CD4-positive, alpha-beta T cell (primary cell): ENCODE measurements at regions of chr15 and their contacts with region 1.

Region 1: DNA sequence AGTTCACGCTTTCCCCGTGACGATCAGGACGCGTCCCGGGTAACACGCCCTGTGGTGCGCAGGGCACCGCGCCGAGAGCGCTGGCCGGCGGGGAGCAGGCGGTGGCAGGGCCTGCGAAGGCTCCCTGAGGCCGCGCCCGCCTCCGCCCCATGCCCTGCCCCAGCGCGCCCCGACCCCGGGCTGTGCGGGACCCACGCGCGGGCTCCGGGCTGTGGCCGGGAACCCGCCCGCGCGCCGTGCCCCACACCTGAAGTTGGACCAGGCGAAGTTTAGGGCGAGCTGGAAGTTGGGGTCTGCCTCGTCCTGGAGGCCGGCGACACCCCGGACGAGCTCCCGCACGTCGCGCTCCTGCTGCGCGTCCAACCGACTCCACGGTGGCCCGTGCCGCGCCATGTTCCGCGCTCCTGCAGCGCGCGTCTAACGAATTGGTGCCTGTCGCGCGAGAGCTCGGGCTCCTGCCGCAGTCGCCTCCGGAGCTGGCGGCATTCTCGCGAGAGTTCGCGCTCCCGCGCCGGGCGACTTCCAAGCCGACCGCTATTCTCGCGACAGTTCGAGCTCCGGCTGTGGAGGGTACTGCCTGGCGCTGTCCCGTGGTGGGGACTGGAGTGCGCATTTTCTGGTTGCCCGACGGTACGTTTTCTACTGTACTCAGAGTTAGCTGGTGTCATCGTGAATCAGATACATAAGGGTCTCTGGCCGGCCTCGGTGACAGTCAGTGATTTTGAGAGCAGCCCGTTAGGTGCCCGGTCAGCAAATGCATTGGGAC is at the start of gene TUBGCP5:
- DNase-seq: peak; percentile 93 to 99 (median 95)
- ATAC-seq: peak; percentile 94
- H3K4me3 ChIP-seq: peak within 1 kb of the TSS; percentile 79
- H3K4me3 Mint-ChIP-seq: peak within 1 kb of the TSS; percentile 100
- H3K27ac ChIP-seq: no peak within 1 kb of the TSS
- H3K27ac Mint-ChIP-seq: peak within 1 kb of the TSS; percentile 91
- H3K4me1 ChIP-seq: peaks cover 18% of the 10 kb centered on the region
- H3K4me1 Mint-ChIP-seq: peaks cover 31% of the 10 kb centered on the region
- H3K27me3 ChIP-seq: no peaks in the 10 kb centered on the region
- H3K27me3 Mint-ChIP-seq: no peaks in the 10 kb centered on the region
- CTCF ChIP-seq: no peak
- total RNA-seq, gene TUBGCP5: 24.2 to 24.5 TPM

Region 2: GRCh38 chr15:22786868-22787698 is 252.3 kb before region 1 on chr15:
- CTCF ChIA-PET with region 1: interaction called, 3 read pairs
- POLR2A ChIA-PET with region 1: interaction called, 10 read pairs
- intact Hi-C with region 1: no loop called
- DNase-seq: peak in 4 of 14 experiments; percentile 8 to 45 (median 24)
- ATAC-seq: peak; percentile 23
- H3K4me3 ChIP-seq: peak overlapping the region; percentile 62
- H3K4me3 Mint-ChIP-seq: peak overlapping the region; percentile 92
- H3K27ac ChIP-seq: no peak overlapping the region
- H3K27ac Mint-ChIP-seq: peak overlapping the region; percentile 70
- H3K4me1 ChIP-seq: peaks cover 21% of the 10 kb centered on the region
- H3K4me1 Mint-ChIP-seq: peaks cover 37% of the 10 kb centered on the region
- H3K27me3 ChIP-seq: no peaks in the 10 kb centered on the region
- H3K27me3 Mint-ChIP-seq: no peaks in the 10 kb centered on the region
- CTCF ChIP-seq: no peak

Region 3: DNA sequence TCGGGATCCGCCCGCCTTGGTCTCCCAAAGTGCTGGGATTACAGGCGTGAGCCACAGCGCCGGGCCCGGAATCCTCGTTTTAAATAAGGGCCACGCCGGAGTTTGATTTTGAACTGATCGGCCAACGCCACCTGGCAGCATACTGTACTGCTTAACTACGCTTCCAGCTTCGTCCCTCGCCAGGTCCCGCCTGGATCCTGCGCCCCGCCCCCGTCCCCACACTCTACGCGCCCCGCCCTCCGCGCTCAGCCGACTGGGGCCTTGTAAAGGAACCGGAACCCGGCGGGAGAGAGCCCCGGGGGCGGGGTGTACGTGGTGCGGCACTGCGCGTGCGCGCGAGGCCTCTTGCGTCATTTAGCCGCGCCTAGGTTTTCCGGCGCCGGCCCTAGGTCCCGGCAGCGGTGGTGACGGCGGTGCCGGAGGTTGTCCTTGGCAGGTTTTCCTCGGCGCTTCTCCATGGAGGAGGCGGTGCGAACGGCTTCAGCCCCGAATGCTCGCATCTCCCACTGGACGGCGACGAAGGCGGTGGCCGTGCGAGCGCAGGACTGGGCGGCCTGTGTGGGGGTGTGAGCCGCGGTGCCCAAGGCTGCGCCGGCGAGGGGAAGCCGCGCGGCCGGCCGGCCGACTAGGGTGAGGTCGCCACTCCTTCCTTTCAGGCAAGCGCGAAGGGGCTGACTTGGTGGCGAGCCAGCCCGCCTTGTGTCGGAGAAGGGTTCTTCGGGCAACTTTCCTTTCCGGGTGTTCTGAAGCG is 200.9 kb before region 1 on chr15 and contains the start of gene NIPA2:
- CTCF ChIA-PET with region 1: no interaction called
- POLR2A ChIA-PET with region 1: interaction called, 15 read pairs
- intact Hi-C with region 1: no loop called
- DNase-seq: peak; percentile 97 to 99 (median 98)
- ATAC-seq: peak; percentile 96
- H3K4me3 ChIP-seq: peak within 1 kb of the TSS; percentile 97
- H3K4me3 Mint-ChIP-seq: peak within 1 kb of the TSS; percentile 97
- H3K27ac ChIP-seq: peak within 1 kb of the TSS; percentile 90 to 94
- H3K27ac Mint-ChIP-seq: peak within 1 kb of the TSS; percentile 92
- H3K4me1 ChIP-seq: peaks cover 15% of the 10 kb centered on the region
- H3K4me1 Mint-ChIP-seq: peaks cover 35% of the 10 kb centered on the region
- H3K27me3 ChIP-seq: no peaks in the 10 kb centered on the region
- H3K27me3 Mint-ChIP-seq: no peaks in the 10 kb centered on the region
- CTCF ChIP-seq: no peak
- total RNA-seq, gene NIPA2: 33.9 to 36.7 TPM

Region 4: DNA sequence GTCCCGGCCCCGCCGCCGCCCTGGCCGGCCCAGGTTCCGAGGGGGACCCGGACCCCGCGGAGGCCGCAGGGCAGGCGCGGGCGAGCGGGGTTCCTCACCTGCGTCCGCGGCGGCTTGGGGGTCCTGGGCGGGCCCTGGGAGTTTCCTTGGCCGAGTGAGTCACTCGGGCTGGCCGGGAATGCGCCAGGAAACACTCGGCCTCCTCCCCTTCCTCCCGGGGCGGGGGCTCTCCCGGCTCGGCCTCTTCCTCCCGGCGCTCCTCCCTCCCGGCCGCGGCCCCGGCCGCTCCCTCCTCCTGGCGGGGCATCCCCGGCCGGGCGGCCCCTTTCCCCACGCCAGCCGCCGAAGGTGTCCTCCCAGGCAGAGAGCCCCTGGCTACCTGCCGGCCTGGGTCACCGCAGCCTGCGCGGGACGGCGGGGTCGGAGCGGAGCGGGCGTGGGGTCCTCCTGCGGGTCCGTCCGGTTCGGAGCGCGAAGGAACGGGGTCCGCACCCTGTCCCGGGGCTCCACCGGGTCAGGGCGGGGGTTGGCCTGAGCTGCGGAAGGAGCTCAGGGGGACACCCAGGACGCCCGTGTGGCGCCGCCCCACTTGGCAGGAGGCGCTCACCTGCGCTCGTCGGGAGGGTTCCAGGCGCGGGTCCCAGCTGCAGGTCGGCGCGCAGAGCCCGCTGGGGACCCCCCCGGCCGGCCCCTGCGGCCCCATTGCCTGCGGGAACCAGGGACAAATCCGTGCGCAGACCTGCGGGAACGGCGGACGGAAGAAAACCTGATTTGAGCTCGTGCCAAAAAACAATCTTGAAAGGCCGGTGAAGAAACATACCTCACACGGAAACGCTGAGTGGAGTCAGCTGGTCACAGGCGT is 58.9 kb before region 1 on chr15 and contains the start of gene CYFIP1:
- CTCF ChIA-PET with region 1: no interaction called
- POLR2A ChIA-PET with region 1: interaction called, 14 read pairs
- intact Hi-C with region 1: no loop called
- DNase-seq: peak in 5 of 14 experiments; percentile 8 to 59 (median 22)
- ATAC-seq: peak; percentile 41
- H3K4me3 ChIP-seq: peak within 1 kb of the TSS; percentile 63
- H3K4me3 Mint-ChIP-seq: peak within 1 kb of the TSS; percentile 90
- H3K27ac ChIP-seq: no peak within 1 kb of the TSS
- H3K27ac Mint-ChIP-seq: no peak within 1 kb of the TSS
- H3K4me1 ChIP-seq: peaks cover 19% of the 10 kb centered on the region
- H3K4me1 Mint-ChIP-seq: peaks cover 14% of the 10 kb centered on the region
- H3K27me3 ChIP-seq: peaks cover 13 to 14% of the 10 kb centered on the region in 2 experiments
- H3K27me3 Mint-ChIP-seq: peaks cover 17% of the 10 kb centered on the region
- CTCF ChIP-seq: no peak
- total RNA-seq, gene CYFIP1: 3.2 to 4.4 TPM

Region 5: GRCh38 chr15:23118203-23118602 is 78.9 kb after region 1 on chr15:
- CTCF ChIA-PET with region 1: no interaction called
- POLR2A ChIA-PET with region 1: no interaction called
- intact Hi-C with region 1: no loop called
- DNase-seq: no peak
- ATAC-seq: no peak
- H3K4me3 ChIP-seq: no peak overlapping the region
- H3K4me3 Mint-ChIP-seq: no peak overlapping the region
- H3K27ac ChIP-seq: no peak overlapping the region
- H3K27ac Mint-ChIP-seq: no peak overlapping the region
- H3K4me1 ChIP-seq: no peaks in the 10 kb centered on the region
- H3K4me1 Mint-ChIP-seq: no peaks in the 10 kb centered on the region
- H3K27me3 ChIP-seq: no peaks in the 10 kb centered on the region
- H3K27me3 Mint-ChIP-seq: peaks cover 18% of the 10 kb centered on the region
- CTCF ChIP-seq: no peak